Tibial artery (tissue), 4 donors: ENCODE measurements at regions of chr1 and their contacts with region 1.

Region 1: DNA sequence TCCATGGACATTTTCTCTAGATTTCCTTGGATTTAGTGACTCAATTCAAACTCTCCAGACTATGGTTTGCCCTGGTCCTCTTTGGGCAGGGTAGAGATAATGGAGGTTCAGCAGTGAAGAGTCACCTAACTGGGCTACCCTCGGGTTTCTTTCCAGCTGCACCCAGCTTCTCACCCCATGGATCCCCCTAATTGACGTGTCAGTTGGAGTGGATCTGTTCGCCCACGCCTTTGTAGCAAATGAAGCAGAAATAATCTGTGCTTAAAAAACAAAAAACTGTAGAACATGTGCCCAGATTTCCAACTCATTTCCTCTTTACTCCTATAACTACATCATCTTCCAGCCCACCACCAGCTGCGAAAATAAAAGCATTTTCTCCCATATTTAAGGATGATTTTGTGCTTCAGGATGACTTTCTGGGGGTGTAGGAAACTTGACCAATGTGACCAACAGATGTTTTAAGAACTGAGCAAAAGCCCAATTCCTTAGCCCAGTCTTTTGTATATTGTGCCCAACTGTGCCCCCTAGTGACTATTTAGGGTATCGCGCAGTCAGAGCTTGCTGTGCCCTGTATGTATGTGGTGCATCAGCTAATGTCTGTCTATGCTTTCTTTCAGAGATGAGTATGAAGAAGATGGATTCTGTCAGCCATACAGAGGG is 66.5 kb upstream of the UBE2U start:
- DNase-seq: peak; percentile 85 to 92
- H3K4me3 ChIP-seq: no peak overlapping the region
- H3K27ac ChIP-seq: peak overlapping the region; percentile 5 to 32
- H3K4me1 ChIP-seq: peaks cover 0 to 44% (median 9%) of the 10 kb centered on the region in 4 donors
- H3K27me3 ChIP-seq: no peaks in the 10 kb centered on the region
- CTCF ChIP-seq: peak; percentile 90 to 92

Region 2: GRCh38 chr1:63917571-63918417 is 219.1 kb before region 1 on chr1:
- intact Hi-C with region 1: loop called (anchors 5 kb)
- DNase-seq: no peak
- H3K4me3 ChIP-seq: peak overlapping the region; percentile 8 to 27
- H3K27ac ChIP-seq: peak overlapping the region; percentile 66 to 76
- H3K4me1 ChIP-seq: peaks cover 0 to 92% (median 34%) of the 10 kb centered on the region in 4 donors
- H3K27me3 ChIP-seq: no peaks in the 10 kb centered on the region
- CTCF ChIP-seq: peak; percentile 14 to 28